GM10248 (cell line): ENCODE measurements at regions of chr13 and their contacts with region 1.

Region 1: DNA sequence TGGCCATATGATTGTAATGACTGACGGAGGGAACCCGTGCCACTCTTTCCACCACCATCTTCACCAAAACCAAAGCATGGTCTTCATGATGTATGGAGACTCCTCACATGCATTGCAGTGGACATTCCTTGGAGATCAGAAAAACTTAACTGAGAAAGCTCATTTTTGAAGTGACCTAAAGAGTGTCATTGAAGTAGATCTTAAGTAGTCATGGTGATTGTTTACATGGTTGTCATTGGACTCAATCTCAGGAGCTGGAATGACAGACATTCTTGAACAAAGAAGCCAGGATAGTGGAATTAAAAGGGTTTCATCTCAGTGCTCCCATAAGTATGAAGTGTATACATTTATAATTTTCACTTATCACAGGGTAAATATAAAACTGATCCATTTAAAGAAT is 236.7 kb upstream of the IPO5 start:
- DNase-seq: no peak
- CTCF ChIP-seq: no peak

Region 2: GRCh38 chr13:97561182-97561581 is 155.6 kb before region 1 on chr13:
- CTCF ChIA-PET with region 1: no interaction called
- POLR2A ChIA-PET with region 1: no interaction called
- DNase-seq: no peak
- CTCF ChIP-seq: no peak

Region 3: DNA sequence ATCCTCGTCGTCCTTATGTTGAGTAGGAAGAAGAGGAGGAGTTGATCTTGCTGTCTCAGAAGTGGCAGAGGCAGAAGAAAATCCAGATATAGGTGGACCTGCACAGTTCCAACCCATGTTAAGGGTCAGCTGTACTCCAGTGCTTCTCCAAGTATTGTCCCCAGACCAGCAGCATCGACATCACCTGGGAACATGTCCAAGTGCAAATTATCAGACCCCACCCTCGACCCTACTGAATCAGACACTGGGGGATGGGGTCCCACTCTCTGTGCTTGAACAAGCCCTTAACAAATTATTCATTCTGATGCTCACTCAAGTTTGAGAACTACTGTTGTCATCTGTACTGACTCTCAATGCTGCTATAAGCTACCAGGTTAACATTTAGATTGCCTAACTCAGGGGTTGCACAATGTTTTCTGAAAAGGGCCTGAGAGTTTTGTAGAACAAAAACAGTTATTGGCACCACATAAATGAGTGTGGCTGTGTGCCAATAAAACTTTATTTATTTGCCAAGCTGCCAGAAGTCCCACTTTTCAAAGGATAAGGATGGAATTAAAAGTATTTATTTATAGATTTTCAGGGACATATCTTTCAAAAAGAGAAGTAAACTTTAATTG is 10.0 kb after region 1 on chr13:
- CTCF ChIA-PET with region 1: interaction called, 10 read pairs
- POLR2A ChIA-PET with region 1: no interaction called
- DNase-seq: no peak
- CTCF ChIP-seq: no peak